GM12878 (cell line): ENCODE measurements at regions of chr4 and their contacts with region 1.

Region 1: GRCh38 chr4:155795991-155796390 is 37.2 kb downstream of the GUCY1B1 start:
- DNase-seq: no peak
- ATAC-seq: peak; percentile 92
- H3K4me3 ChIP-seq: no peak overlapping the region
- H3K27ac ChIP-seq: no peak overlapping the region
- H3K4me1 ChIP-seq: no peaks in the 10 kb centered on the region
- H3K27me3 ChIP-seq: no peaks in the 10 kb centered on the region
- CTCF ChIP-seq: peak; percentile 11 to 44 (median 33); a peak in 4 of 6 replicates
- EP300 ChIP-seq: no peak
- POLR2A ChIP-seq: no peak
- RAD21 ChIP-seq: no peak

Region 2: GRCh38 chr4:155442267-155443105 is 353.5 kb before region 1 on chr4:
- CTCF ChIA-PET with region 1: interaction called, 8 read pairs
- POLR2A ChIA-PET with region 1: interaction called, 3 read pairs
- RAD21 ChIA-PET with region 1: interaction called, 5 read pairs
- SMC1A ChIA-PET with region 1: interaction called, 8 read pairs
- in situ Hi-C with region 1: loop called (anchors 5 kb)
- intact Hi-C with region 1: no loop called
- DNase-seq: no peak
- ATAC-seq: peak; percentile 89
- H3K4me3 ChIP-seq: no peak overlapping the region
- H3K27ac ChIP-seq: no peak overlapping the region
- H3K4me1 ChIP-seq: no peaks in the 10 kb centered on the region
- H3K27me3 ChIP-seq: no peaks in the 10 kb centered on the region; a peak in 1 of 4 replicates
- CTCF ChIP-seq: peak; percentile 83 to 87 (median 87)
- EP300 ChIP-seq: no peak
- POLR2A ChIP-seq: no peak
- RAD21 ChIP-seq: peak; percentile 85